Activated CD4-positive, alpha-beta memory T cell treated with anti-CD3 and anti-CD28 coated beads, Interleukin-2, amount 10 ng/mL, durations not matched to agents 7 days and 5 days (primary cell): ENCODE measurements at regions of chr22 and their contacts with region 1.

Region 1: DNA sequence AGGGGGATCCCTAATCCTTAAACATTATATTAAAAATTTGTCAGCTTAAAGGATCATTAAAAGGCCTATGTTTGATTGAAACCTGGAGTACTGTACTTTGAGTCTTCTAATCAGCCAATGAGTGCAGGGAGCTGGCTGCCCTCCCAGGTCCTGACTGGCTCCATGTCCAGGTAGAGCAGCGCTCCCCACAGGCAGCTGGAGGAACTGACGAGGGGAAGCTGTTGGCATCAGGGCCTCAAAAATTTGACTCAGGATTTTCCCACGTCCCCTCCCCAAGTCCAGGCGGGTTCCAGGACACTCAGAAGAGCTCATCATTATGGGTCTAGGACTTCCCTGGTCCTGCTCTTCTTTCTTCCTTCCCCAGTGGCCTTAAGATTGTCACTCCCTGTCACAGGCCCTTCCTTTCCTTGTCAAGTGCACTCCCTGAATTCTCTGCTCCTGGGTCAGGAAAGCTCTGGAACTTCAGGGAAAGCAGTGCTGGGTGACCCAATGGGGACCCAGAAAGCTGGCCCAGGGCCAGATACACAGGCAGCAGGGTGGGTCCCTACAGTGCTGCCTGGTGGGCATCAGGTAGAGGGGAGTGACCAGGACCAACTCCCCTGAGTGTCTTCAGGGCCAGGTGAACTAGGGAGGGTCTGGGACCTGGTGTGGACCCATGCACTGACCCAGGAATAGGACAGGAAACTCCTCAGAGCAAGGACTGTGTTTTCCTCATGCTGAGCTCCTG is 65.5 kb downstream of the GGTLC2 start:
- DNase-seq: no peak
- H3K4me3 Mint-ChIP-seq: no peak overlapping the region
- H3K27ac Mint-ChIP-seq: no peak overlapping the region
- H3K4me1 Mint-ChIP-seq: no peaks in the 10 kb centered on the region
- H3K27me3 Mint-ChIP-seq: no peaks in the 10 kb centered on the region

Region 2: GRCh38 chr22:22720201-22720723 is 10.4 kb after region 1 on chr22:
- CTCF ChIA-PET with region 1: interaction called, 12 read pairs
- POLR2A ChIA-PET with region 1: interaction called, 3 read pairs
- DNase-seq: peak; percentile 52
- H3K4me3 Mint-ChIP-seq: no peak overlapping the region
- H3K27ac Mint-ChIP-seq: peak overlapping the region; percentile 52
- H3K4me1 Mint-ChIP-seq: peaks cover 32% of the 10 kb centered on the region
- H3K27me3 Mint-ChIP-seq: peaks cover 2% of the 10 kb centered on the region